ENCODE measurements at regions of chr17 and their contacts with region 1.

Region 1: GRCh38 chr17:6069539-6070429 is at the start of gene WSCD1:
- ATAC-seq: peak; percentile 66 to 83 (median 74)
- H3K4me3 ChIP-seq: peak within 1 kb of the TSS; percentile 73 to 93 (median 77)
- H3K27ac ChIP-seq: peak within 1 kb of the TSS in 1 of 2 donors; percentile 46
- H3K4me1 ChIP-seq: peaks cover 25 to 30% of the 10 kb centered on the region in 2 donors
- total RNA-seq, gene WSCD1: 0.10 to 28.3 (median 22.9) TPM in 7 of 8 experiments, not detected in the other

Region 2: GRCh38 chr17:5619088-5619740 is 450.6 kb before region 1 on chr17:
- in situ Hi-C with region 1: loop called in 1 of 9 experiments (anchors 25 kb)
- ATAC-seq: no peak
- H3K4me3 ChIP-seq: no peak overlapping the region
- H3K27ac ChIP-seq: no peak overlapping the region
- H3K4me1 ChIP-seq: peaks cover 0 to 6% of the 10 kb centered on the region in 2 donors

Region 3: DNA sequence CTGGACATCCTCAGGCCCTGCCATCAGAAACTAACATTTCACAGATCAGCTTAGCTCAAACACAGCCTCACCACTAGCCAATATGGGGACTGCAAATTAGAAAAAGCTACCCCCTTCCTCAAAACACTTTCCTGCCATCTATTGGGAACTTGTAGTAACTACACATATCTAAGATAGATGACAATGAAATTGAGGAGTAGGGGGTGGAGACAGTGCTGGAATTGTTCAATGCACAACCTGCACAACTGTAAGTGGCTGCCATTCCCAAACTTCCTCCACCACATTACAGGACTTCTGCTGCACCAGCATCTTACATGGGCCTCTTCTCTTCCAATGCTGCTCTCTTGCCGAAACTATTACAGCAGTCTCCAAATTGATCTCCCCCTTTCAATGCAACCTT is 343.3 kb after region 1 on chr17:
- in situ Hi-C with region 1: loop called in 1 of 9 experiments (anchors 10 kb)
- ATAC-seq: peak; percentile 21 to 70 (median 44)
- H3K4me3 ChIP-seq: no peak overlapping the region
- H3K27ac ChIP-seq: no peak overlapping the region
- H3K4me1 ChIP-seq: peaks cover 4 to 6% of the 10 kb centered on the region in 2 donors